MCF 10A (cell line): ENCODE measurements at regions of chr14 and their contacts with region 1.

Region 1: GRCh38 chr14:49892636-49893308 is at the start of gene ARF6:
- DNase-seq: peak; percentile 97
- H3K4me3 Mint-ChIP-seq: peak within 1 kb of the TSS; percentile 92
- H3K27ac Mint-ChIP-seq: peak within 1 kb of the TSS; percentile 99
- H3K4me1 Mint-ChIP-seq: peaks cover 28% of the 10 kb centered on the region
- H3K27me3 Mint-ChIP-seq: no peaks in the 10 kb centered on the region
- CTCF ChIP-seq: no peak
- total RNA-seq, gene ARF6: 111 and 112 TPM in 2 replicates

Region 2: DNA sequence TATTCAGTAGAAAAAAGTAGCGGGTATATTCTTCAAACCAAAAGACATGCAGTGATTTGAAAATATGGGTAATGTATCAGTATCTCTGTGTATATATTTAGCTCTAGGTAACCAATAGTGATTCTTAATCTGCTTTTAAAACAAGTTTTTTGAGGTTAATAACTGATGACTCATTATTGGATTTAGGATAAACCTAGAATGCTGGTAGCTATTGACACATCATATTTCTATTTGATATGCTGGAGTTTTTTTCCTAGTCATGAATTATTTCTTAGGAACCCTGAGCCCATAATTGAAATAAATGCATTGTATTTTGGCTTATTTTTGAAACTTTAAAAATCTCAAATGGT is 15.6 kb after region 1 on chr14:
- CTCF ChIA-PET with region 1: interaction called, 3 read pairs
- POLR2A ChIA-PET with region 1: interaction called, 20 read pairs
- intact Hi-C with region 1: no loop called
- DNase-seq: no peak
- H3K4me3 Mint-ChIP-seq: peak overlapping the region; percentile 51
- H3K27ac Mint-ChIP-seq: peak overlapping the region; percentile 97
- H3K4me1 Mint-ChIP-seq: peaks cover 25% of the 10 kb centered on the region
- H3K27me3 Mint-ChIP-seq: no peaks in the 10 kb centered on the region
- CTCF ChIP-seq: no peak

Region 3: GRCh38 chr14:49959822-49960408 is 67.1 kb after region 1 on chr14:
- CTCF ChIA-PET with region 1: no interaction called
- POLR2A ChIA-PET with region 1: interaction called, 10 read pairs
- intact Hi-C with region 1: loop called (anchors 5 kb)
- DNase-seq: no peak
- H3K4me3 Mint-ChIP-seq: no peak overlapping the region
- H3K27ac Mint-ChIP-seq: no peak overlapping the region
- H3K4me1 Mint-ChIP-seq: peaks cover 31% of the 10 kb centered on the region
- H3K27me3 Mint-ChIP-seq: no peaks in the 10 kb centered on the region
- CTCF ChIP-seq: no peak

Region 4: DNA sequence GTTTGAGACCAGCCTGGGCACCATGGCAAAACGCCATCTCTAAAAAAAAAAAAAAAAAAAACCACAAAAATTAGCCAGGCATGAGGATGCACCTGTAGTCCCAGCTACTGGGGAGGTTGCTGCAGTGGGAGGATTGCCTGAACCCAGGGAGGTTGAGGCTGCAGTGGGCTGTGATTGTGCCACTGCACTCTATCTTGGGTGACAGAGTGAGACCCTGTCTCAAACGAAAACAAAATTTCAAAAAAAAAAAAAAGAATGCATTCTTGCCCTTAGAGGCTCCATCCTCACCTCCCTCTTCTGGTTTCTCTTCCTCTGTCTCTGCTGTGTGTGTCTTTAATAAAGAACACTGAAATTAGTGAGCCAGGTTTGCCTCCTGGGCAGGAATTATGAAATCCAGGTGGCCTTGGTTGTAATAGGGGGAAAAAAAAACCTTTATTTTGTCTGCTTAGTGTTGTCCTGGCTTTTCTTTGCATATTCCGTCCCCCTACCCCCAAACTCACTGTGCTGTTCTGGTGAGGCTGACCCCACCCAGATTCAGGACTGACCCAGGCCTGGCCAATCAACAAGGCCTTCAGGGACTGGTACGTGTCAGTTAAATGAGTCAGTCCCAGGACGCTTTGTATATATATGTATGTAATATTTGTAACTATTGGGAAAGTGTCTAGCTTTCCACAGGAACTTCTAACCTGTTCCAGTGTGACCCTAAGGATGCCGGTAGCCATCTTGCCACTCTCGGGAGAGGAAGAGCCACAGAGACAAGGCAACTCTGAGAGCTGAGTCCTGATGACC is 116.0 kb after region 1 on chr14:
- CTCF ChIA-PET with region 1: interaction called, 8 read pairs
- POLR2A ChIA-PET with region 1: interaction called, 94 read pairs
- intact Hi-C with region 1: no loop called
- DNase-seq: peak; percentile 96
- H3K4me3 Mint-ChIP-seq: peak overlapping the region; percentile 69
- H3K27ac Mint-ChIP-seq: peak overlapping the region; percentile 96
- H3K4me1 Mint-ChIP-seq: peaks cover 29% of the 10 kb centered on the region
- H3K27me3 Mint-ChIP-seq: no peaks in the 10 kb centered on the region
- CTCF ChIP-seq: no peak

Region 5: GRCh38 chr14:50060871-50061663 is 168.3 kb after region 1 on chr14:
- CTCF ChIA-PET with region 1: interaction called, 5 read pairs
- POLR2A ChIA-PET with region 1: interaction called, 12 read pairs
- intact Hi-C with region 1: loop called (anchors 5 kb)
- DNase-seq: peak; percentile 96
- H3K4me3 Mint-ChIP-seq: no peak overlapping the region
- H3K27ac Mint-ChIP-seq: peak overlapping the region; percentile 84
- H3K4me1 Mint-ChIP-seq: peaks cover 20% of the 10 kb centered on the region
- H3K27me3 Mint-ChIP-seq: no peaks in the 10 kb centered on the region
- CTCF ChIP-seq: no peak

Region 6: DNA sequence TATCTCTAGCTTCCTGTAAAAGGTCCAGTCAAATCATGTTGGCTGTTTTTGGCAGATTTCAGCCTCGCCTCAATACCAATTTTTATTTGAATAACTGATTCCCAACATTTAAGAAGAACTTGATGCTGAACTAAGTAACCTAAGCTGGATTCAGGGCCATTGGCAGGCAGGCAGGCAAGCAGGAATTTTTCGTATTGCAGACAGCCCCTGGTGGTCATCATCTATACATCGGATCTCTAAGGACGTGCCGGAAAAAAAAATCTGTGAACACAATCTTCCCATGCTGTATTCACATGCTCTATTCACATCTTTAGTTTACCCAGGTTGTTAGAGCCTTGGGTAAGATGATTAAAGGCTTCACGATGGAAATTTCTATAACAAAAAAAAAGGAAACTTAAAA is 216.6 kb after region 1 on chr14:
- CTCF ChIA-PET with region 1: interaction called, 14 read pairs
- POLR2A ChIA-PET with region 1: interaction called, 5 read pairs
- intact Hi-C with region 1: loop called (anchors 1 kb)
- DNase-seq: no peak
- H3K4me3 Mint-ChIP-seq: no peak overlapping the region
- H3K27ac Mint-ChIP-seq: no peak overlapping the region
- H3K4me1 Mint-ChIP-seq: no peaks in the 10 kb centered on the region
- H3K27me3 Mint-ChIP-seq: no peaks in the 10 kb centered on the region
- CTCF ChIP-seq: peak; percentile 14